WTC11 (cell line): ENCODE measurements at regions of chr12 and their contacts with region 1.

Region 1: GRCh38 chr12:101823891-101824290 is 6.9 kb downstream of the GNPTAB start:
- DNase-seq: peak; percentile 54
- ATAC-seq: peak; percentile 89
- H3K4me3 Mint-ChIP-seq: no peak overlapping the region
- H3K27ac Mint-ChIP-seq: peak overlapping the region; percentile 72
- H3K4me1 Mint-ChIP-seq: peaks cover 62% of the 10 kb centered on the region
- H3K27me3 Mint-ChIP-seq: no peaks in the 10 kb centered on the region
- CTCF ChIP-seq: no peak

Region 2: GRCh38 chr12:101792051-101792931 is 31.6 kb before region 1 on chr12:
- CTCF ChIA-PET with region 1: no interaction called
- POLR2A ChIA-PET with region 1: no interaction called
- DNase-seq: no peak
- ATAC-seq: peak; percentile 62; the same call in 1 of the 2 replicates
- H3K4me3 Mint-ChIP-seq: no peak overlapping the region
- H3K27ac Mint-ChIP-seq: peak overlapping the region; percentile 35; the same call in 1 of the 2 replicates
- H3K4me1 Mint-ChIP-seq: no peaks in the 10 kb centered on the region
- H3K27me3 Mint-ChIP-seq: no peaks in the 10 kb centered on the region
- CTCF ChIP-seq: no peak

Region 3: DNA sequence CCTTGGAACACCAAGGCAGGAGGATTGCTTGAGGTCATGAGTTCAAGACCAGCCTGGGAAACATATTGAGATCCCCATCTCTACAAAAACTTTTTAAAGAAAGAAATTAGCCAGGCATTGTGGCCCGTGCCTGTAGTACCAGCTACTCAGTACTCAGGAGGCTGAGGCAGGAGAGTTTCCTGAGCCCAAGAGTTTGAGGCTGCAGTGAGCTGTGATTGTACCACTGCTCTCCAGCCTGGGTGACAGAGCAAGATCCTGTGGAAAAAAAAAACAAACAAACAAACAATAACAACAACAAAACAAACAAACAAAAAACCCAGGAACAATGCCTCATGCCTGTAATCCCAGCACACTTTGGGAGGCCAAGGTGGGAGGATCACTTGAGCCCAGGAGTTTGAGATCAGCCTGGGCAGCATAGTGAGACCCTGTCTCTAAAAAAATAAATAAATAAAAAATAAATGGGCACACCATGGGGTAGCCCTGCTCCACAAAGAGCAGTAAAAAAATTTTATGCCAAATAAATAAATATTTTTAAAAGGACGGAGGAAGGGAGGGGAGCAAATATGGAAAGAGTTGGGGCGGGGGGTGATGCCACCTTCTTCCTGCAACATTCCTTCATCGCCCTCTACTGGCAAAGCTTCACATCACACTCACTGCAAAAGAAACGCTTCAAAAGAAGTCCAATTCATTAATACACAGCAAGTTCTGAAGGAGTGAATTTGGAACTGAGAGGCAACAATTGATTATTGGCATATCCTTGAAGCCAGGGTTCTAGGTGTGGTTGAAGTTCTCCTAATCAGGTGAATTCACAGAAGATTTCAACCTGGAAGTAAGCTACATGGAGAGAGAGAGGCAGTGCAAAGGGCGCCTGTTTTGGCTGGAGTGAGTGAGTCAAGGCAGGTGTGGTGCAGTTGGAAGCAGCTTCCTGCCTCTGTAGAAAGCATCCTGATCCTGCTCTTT is 15.7 kb after region 1 on chr12:
- CTCF ChIA-PET with region 1: interaction called, 69 read pairs
- POLR2A ChIA-PET with region 1: interaction called, 8 read pairs
- DNase-seq: peak; percentile 74
- ATAC-seq: peak; percentile 80
- H3K4me3 Mint-ChIP-seq: no peak overlapping the region
- H3K27ac Mint-ChIP-seq: no peak overlapping the region
- H3K4me1 Mint-ChIP-seq: no peaks in the 10 kb centered on the region
- H3K27me3 Mint-ChIP-seq: no peaks in the 10 kb centered on the region
- CTCF ChIP-seq: peak; percentile 67

Region 4: DNA sequence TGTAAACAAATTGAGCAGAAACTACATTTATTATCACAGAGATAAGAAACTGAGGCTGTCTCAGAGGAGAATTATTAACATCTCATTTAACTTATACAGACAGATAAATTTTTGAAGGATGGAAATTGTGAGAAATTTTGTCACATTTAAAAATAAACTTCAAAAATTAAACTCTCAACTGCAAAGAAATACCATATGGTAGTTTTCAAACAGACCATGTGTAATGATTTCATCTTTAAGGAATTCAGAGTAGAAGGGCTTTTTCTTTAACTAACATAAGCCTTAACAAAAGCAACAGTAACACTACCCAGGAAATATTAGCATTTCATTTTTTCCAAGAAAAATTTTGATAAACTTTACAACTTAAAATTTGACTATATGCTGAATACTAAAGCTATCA is 269.4 kb after region 1 on chr12:
- CTCF ChIA-PET with region 1: no interaction called
- POLR2A ChIA-PET with region 1: no interaction called
- DNase-seq: no peak
- ATAC-seq: no peak
- H3K4me3 Mint-ChIP-seq: no peak overlapping the region
- H3K27ac Mint-ChIP-seq: no peak overlapping the region
- H3K4me1 Mint-ChIP-seq: no peaks in the 10 kb centered on the region
- H3K27me3 Mint-ChIP-seq: no peaks in the 10 kb centered on the region
- CTCF ChIP-seq: no peak

Region 5: GRCh38 chr12:102513272-102513671 is 689.4 kb after region 1 on chr12:
- CTCF ChIA-PET with region 1: no interaction called
- POLR2A ChIA-PET with region 1: no interaction called
- DNase-seq: no peak
- ATAC-seq: no peak
- H3K4me3 Mint-ChIP-seq: no peak overlapping the region
- H3K27ac Mint-ChIP-seq: no peak overlapping the region
- H3K4me1 Mint-ChIP-seq: peaks cover 10% of the 10 kb centered on the region
- H3K27me3 Mint-ChIP-seq: peaks cover 4% of the 10 kb centered on the region; the same call in 1 of the 2 replicates
- CTCF ChIP-seq: no peak